ENCODE measurements at regions of chr2 and their contacts with region 1.

Region 1: GRCh38 chr2:102442967-102443828 is 20.2 kb downstream of the IL18RAP start:
- DNase-seq: peak; percentile 8 to 76 (median 44)
- ATAC-seq: peak; percentile 73
- H3K4me3 ChIP-seq: no peak overlapping the region
- H3K4me3 Mint-ChIP-seq: no peak overlapping the region
- H3K27ac ChIP-seq: no peak overlapping the region
- H3K27ac Mint-ChIP-seq: peak overlapping the region; percentile 64
- H3K4me1 ChIP-seq: peaks cover 4% of the 10 kb centered on the region
- H3K4me1 Mint-ChIP-seq: peaks cover 9% of the 10 kb centered on the region
- H3K27me3 ChIP-seq: no peaks in the 10 kb centered on the region
- H3K27me3 Mint-ChIP-seq: no peaks in the 10 kb centered on the region
- CTCF ChIP-seq: peak; percentile 94

Region 2: DNA sequence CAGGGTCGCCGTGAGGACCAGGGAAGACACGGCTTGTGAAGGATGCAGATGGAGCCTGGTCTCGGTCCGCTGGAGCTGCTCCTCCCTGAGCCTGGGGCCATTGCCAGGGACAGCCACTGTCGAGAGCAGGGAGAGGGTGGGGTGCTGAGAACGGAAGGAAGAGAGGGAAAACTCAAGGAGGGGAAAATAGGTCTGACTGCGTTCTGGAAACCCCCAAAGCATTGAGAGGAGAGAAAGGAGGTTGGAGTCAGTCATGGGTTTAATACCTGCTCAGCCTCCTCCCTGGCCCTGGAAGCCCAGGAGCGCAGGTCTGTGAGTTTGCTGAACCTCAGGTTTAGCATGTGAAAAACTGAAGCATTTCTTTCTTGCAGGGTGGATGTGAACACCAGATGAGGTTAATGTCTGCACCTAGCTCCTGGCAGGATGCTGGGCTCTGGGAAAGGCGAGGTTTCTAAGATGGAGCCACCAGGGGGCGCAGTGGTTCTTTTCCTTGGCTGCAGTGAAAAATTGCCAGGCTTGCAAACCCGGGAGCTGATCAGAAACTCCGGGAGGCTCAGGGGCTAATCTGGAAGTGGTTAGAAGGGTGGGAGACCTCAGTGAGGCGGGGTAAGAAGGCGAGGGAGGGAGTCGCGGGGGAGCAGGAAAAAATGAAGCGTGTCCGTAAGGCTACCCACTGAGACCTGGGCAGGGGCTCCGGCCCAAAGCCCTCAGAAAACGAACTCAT is 1101.1 kb before region 1 on chr2:
- CTCF ChIA-PET with region 1: no interaction called
- POLR2A ChIA-PET with region 1: no interaction called
- intact Hi-C with region 1: loop called (anchors 5 to 10 kb)
- DNase-seq: peak; percentile 36 to 85 (median 71)
- ATAC-seq: peak; percentile 52
- H3K4me3 ChIP-seq: no peak overlapping the region
- H3K4me3 Mint-ChIP-seq: no peak overlapping the region
- H3K27ac ChIP-seq: no peak overlapping the region
- H3K27ac Mint-ChIP-seq: no peak overlapping the region
- H3K4me1 ChIP-seq: peaks cover 15% of the 10 kb centered on the region
- H3K4me1 Mint-ChIP-seq: peaks cover 24% of the 10 kb centered on the region
- H3K27me3 ChIP-seq: no peaks in the 10 kb centered on the region
- H3K27me3 Mint-ChIP-seq: no peaks in the 10 kb centered on the region
- CTCF ChIP-seq: peak; percentile 76

Region 3: GRCh38 chr2:102020596-102021181 is 422.5 kb before region 1 on chr2:
- CTCF ChIA-PET with region 1: interaction called, 51 read pairs
- POLR2A ChIA-PET with region 1: no interaction called
- intact Hi-C with region 1: loop called (anchors 1 kb)
- DNase-seq: peak; percentile 63 to 91 (median 80)
- ATAC-seq: peak; percentile 99
- H3K4me3 ChIP-seq: no peak overlapping the region
- H3K4me3 Mint-ChIP-seq: no peak overlapping the region
- H3K27ac ChIP-seq: no peak overlapping the region
- H3K27ac Mint-ChIP-seq: no peak overlapping the region
- H3K4me1 ChIP-seq: peaks cover 4% of the 10 kb centered on the region
- H3K4me1 Mint-ChIP-seq: no peaks in the 10 kb centered on the region
- H3K27me3 ChIP-seq: no peaks in the 10 kb centered on the region
- H3K27me3 Mint-ChIP-seq: no peaks in the 10 kb centered on the region
- CTCF ChIP-seq: peak; percentile 93

Region 4: GRCh38 chr2:102251042-102251848 is 192.0 kb before region 1 on chr2:
- CTCF ChIA-PET with region 1: interaction called, 41 read pairs
- POLR2A ChIA-PET with region 1: no interaction called
- intact Hi-C with region 1: loop called (anchors 1 to 2 kb)
- DNase-seq: peak; percentile 25 to 75 (median 63)
- ATAC-seq: peak; percentile 75
- H3K4me3 ChIP-seq: peak overlapping the region; percentile 57 to 63
- H3K4me3 Mint-ChIP-seq: peak overlapping the region; percentile 89
- H3K27ac ChIP-seq: no peak overlapping the region
- H3K27ac Mint-ChIP-seq: peak overlapping the region; percentile 52
- H3K4me1 ChIP-seq: no peaks in the 10 kb centered on the region
- H3K4me1 Mint-ChIP-seq: peaks cover 37% of the 10 kb centered on the region
- H3K27me3 ChIP-seq: no peaks in the 10 kb centered on the region
- H3K27me3 Mint-ChIP-seq: no peaks in the 10 kb centered on the region
- CTCF ChIP-seq: peak; percentile 87

Region 5: DNA sequence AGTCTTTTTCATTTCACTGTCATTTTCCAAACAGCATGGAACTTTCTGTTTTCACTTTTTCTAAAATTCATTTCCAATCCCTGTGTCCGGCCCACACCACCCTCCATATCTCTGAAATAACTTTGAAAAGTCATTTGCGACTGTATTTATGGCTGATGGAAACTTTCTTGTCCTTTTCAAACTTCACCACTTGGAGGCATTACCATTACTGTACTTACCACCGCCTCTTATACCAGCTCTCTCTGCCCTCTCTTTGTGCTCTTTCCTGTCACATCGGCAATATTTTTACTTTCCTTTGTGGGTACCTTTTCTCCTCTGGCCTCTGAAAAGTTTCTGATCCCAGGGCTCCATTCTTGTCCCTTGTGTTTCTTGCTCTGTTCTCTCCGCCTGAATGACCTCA is 171.4 kb before region 1 on chr2:
- CTCF ChIA-PET with region 1: interaction called, 12 read pairs
- POLR2A ChIA-PET with region 1: no interaction called
- intact Hi-C with region 1: no loop called
- DNase-seq: peak in 2 of 9 experiments; percentile 38 to 44
- ATAC-seq: peak; percentile 48
- H3K4me3 ChIP-seq: no peak overlapping the region
- H3K4me3 Mint-ChIP-seq: peak overlapping the region; percentile 35
- H3K27ac ChIP-seq: no peak overlapping the region
- H3K27ac Mint-ChIP-seq: peak overlapping the region; percentile 52
- H3K4me1 ChIP-seq: peaks cover 13% of the 10 kb centered on the region
- H3K4me1 Mint-ChIP-seq: peaks cover 21% of the 10 kb centered on the region
- H3K27me3 ChIP-seq: peaks cover 0 to 5% of the 10 kb centered on the region in 2 experiments
- H3K27me3 Mint-ChIP-seq: no peaks in the 10 kb centered on the region
- CTCF ChIP-seq: peak; percentile 18

Region 6: GRCh38 chr2:102355526-102356380 is 87.4 kb before region 1 on chr2 and contains the start of gene IL18R1:
- CTCF ChIA-PET with region 1: interaction called, 19 read pairs
- POLR2A ChIA-PET with region 1: interaction called, 3 read pairs
- intact Hi-C with region 1: loop called (anchors 1 to 2 kb)
- DNase-seq: peak; percentile 22 to 87 (median 63)
- ATAC-seq: peak; percentile 79
- H3K4me3 ChIP-seq: peak within 1 kb of the TSS; percentile 91 to 97
- H3K4me3 Mint-ChIP-seq: peak within 1 kb of the TSS; percentile 95
- H3K27ac ChIP-seq: peak within 1 kb of the TSS; percentile 63 to 84
- H3K27ac Mint-ChIP-seq: peak within 1 kb of the TSS; percentile 96
- H3K4me1 ChIP-seq: peaks cover 14% of the 10 kb centered on the region
- H3K4me1 Mint-ChIP-seq: peaks cover 40% of the 10 kb centered on the region
- H3K27me3 ChIP-seq: no peaks in the 10 kb centered on the region
- H3K27me3 Mint-ChIP-seq: no peaks in the 10 kb centered on the region
- CTCF ChIP-seq: peak; percentile 79
- total RNA-seq, gene IL18R1: 7.0 to 7.7 TPM

Region 7: GRCh38 chr2:102418421-102418961 is 24.7 kb before region 1 on chr2:
- CTCF ChIA-PET with region 1: interaction called, 43 read pairs
- POLR2A ChIA-PET with region 1: no interaction called
- intact Hi-C with region 1: no loop called
- DNase-seq: peak in 2 of 9 experiments; percentile 66 to 80
- ATAC-seq: peak; percentile 71
- H3K4me3 ChIP-seq: peak overlapping the region in 1 of 2 experiments; percentile 40
- H3K4me3 Mint-ChIP-seq: peak overlapping the region; percentile 79
- H3K27ac ChIP-seq: peak overlapping the region; percentile 32 to 75
- H3K27ac Mint-ChIP-seq: peak overlapping the region; percentile 90
- H3K4me1 ChIP-seq: peaks cover 32% of the 10 kb centered on the region
- H3K4me1 Mint-ChIP-seq: peaks cover 62% of the 10 kb centered on the region
- H3K27me3 ChIP-seq: no peaks in the 10 kb centered on the region
- H3K27me3 Mint-ChIP-seq: no peaks in the 10 kb centered on the region
- CTCF ChIP-seq: no peak